Activated CD4-positive, alpha-beta memory T cell treated with anti-CD3 and anti-CD28 coated beads for 36 hours (primary cell): ENCODE measurements at regions of chr10 and their contacts with region 1.

Region 1: DNA sequence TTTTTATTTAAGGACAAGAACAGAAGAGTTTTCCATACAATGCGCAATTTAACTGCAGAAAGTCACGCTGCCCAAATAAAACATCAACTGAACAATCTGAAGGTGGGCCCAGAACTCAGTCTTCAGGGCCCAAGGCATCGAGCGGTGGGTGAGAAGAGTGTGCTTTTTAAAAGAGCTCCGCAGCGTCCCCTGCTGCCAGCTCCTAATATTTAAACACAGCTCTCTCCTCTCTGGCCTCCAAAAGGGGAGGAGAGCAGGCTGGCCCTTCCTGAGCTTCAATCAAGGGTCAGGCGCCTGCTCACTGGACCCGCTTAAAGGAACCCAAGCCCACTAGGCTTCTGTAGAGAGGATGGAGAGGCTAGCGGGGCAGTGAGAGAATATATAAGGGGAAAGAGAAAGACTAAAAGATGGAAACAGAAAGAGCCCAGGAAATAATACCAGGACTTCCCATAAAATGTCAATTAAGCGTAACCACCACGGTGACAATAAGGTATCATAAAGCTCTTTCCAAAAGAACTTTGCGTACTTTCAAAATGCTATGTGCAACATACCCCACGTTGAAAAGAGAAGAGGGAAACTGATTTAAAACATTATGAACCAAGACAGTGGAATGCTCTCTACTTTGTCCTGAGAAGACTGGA is 2.8 kb downstream of the FAM53B start:
- DNase-seq: peak; percentile 86
- H3K4me3 Mint-ChIP-seq: peak overlapping the region; percentile 91
- H3K27ac Mint-ChIP-seq: peak overlapping the region; percentile 88
- H3K4me1 Mint-ChIP-seq: peaks cover 72% of the 10 kb centered on the region
- H3K27me3 Mint-ChIP-seq: no peaks in the 10 kb centered on the region

Region 2: GRCh38 chr10:124530215-124530665 is 211.2 kb before region 1 on chr10:
- CTCF ChIA-PET with region 1: interaction called, 49 read pairs
- POLR2A ChIA-PET with region 1: no interaction called
- intact Hi-C with region 1: loop called (anchors 1 kb)
- DNase-seq: peak; percentile 91
- H3K4me3 Mint-ChIP-seq: no peak overlapping the region
- H3K27ac Mint-ChIP-seq: no peak overlapping the region
- H3K4me1 Mint-ChIP-seq: peaks cover 6% of the 10 kb centered on the region
- H3K27me3 Mint-ChIP-seq: no peaks in the 10 kb centered on the region

Region 3: DNA sequence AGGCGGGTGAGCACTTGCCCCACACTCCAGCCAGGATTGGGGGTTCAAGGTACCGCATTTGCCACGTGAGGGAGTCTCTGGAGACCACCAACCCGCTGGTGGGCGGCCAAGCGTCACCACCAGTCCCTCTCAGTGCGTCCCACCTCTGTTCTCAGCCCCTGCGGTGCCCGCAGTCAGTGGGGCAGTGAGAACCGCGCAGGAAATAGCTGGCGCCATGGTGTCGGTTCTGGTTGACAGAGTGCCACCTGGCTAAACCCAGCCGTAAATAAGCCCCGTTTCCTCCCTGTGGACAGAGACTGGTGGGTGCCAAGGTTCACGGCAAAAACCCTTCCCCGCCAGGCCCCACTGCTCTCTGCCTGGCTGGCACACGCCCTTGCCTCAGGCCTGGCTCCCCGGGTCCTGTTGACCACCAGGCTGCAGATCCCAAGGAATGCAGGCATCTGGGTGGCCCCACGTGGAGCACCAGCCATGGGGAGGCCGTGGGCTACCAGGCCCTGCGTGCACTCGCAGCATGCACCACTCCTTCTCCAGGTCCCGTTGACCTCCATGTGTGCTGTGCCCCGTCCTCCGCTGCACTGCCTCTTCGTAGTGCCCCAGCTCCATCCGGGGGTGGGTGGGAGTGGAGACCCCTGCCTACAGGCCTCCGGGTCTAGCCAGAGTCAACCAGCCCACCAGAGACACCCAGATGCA is 139.8 kb before region 1 on chr10:
- CTCF ChIA-PET with region 1: no interaction called
- POLR2A ChIA-PET with region 1: no interaction called
- intact Hi-C with region 1: no loop called
- DNase-seq: no peak
- H3K4me3 Mint-ChIP-seq: no peak overlapping the region
- H3K27ac Mint-ChIP-seq: no peak overlapping the region
- H3K4me1 Mint-ChIP-seq: no peaks in the 10 kb centered on the region
- H3K27me3 Mint-ChIP-seq: no peaks in the 10 kb centered on the region

Region 4: GRCh38 chr10:124626759-124627380 is 114.5 kb before region 1 on chr10:
- CTCF ChIA-PET with region 1: interaction called, 30 read pairs
- POLR2A ChIA-PET with region 1: interaction called, 4 read pairs
- intact Hi-C with region 1: loop called (anchors 2 kb)
- DNase-seq: peak; percentile 80
- H3K4me3 Mint-ChIP-seq: no peak overlapping the region
- H3K27ac Mint-ChIP-seq: no peak overlapping the region
- H3K4me1 Mint-ChIP-seq: peaks cover 51% of the 10 kb centered on the region
- H3K27me3 Mint-ChIP-seq: no peaks in the 10 kb centered on the region

Region 5: DNA sequence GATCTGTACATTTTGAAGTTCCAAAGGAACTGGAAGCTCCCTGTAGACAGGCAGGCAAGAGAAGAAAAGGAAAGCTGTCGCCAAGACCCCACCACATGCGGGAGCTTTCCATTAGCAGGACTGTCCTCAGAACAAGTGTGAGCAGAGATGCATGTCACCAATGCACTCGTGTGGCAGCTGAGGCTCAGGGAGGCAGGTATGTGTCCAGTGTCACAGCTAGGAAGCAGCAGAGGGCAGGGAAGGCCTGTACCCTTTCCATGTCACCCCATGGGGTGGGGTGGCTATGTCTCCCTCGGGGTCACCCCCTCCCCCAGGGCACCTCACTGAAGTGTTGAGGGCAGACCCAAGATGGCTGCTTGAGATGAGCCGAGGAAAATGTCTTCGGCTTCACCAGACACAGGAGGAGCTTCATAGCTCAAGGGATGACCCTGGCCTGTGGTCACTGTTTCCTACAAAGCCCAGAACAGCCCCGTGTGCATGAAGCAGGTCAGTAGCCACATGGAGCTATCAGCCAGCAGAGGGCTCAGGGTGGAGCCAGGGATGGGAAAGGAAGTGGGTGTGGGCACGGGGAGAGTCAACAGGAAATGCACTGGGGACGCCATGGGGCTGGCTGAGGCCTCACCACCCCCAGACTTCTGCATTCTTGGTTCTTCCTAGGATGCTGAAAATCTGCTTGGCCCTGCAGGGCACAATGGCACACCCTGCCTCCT is 93.8 kb before region 1 on chr10:
- CTCF ChIA-PET with region 1: interaction called, 21 read pairs
- POLR2A ChIA-PET with region 1: interaction called, 3 read pairs
- intact Hi-C with region 1: loop called (anchors 1 kb)
- DNase-seq: peak; percentile 87
- H3K4me3 Mint-ChIP-seq: peak overlapping the region; percentile 58
- H3K27ac Mint-ChIP-seq: peak overlapping the region; percentile 93
- H3K4me1 Mint-ChIP-seq: peaks cover 91% of the 10 kb centered on the region
- H3K27me3 Mint-ChIP-seq: no peaks in the 10 kb centered on the region

Region 6: DNA sequence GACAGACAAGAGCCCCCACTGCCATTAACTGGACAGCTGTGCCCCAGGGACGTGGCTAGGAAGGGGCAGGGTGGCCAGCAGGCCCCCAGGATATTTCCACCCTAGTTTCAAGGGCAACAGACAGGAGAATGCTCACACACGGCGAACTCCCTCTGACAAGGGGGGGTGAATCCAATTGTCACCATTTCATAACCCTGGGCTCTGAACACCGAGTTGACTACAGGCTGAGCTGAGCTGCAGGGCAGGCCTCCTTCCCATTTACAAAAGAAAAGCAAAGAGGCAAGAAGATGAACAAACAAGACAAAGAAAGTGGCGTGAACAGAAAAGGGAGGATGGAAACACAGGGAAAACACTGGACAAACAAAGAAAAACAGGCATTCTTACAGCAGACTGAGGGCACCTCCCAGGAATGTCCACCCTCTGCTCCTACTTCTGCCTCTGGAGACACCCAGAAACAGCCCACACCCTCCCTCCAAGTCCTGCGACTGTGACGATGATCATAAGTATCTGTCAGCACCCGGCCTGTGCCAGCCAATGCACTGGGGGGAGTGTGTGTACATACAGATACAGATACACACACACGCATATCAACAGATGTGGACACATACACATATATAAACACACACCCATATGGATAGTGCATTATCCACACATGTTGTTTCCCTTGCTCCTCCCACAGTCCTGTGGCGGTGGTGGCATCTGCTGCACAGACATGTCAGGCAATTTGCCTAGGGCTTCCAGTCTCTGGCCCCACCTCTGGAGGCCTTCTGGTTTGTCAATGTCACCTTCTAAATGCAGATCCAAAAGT is 63.4 kb before region 1 on chr10:
- CTCF ChIA-PET with region 1: interaction called, 14 read pairs
- POLR2A ChIA-PET with region 1: interaction called, 3 read pairs
- intact Hi-C with region 1: no loop called
- DNase-seq: no peak
- H3K4me3 Mint-ChIP-seq: peak overlapping the region; percentile 7
- H3K27ac Mint-ChIP-seq: peak overlapping the region; percentile 77
- H3K4me1 Mint-ChIP-seq: peaks cover 78% of the 10 kb centered on the region
- H3K27me3 Mint-ChIP-seq: no peaks in the 10 kb centered on the region

Region 7: DNA sequence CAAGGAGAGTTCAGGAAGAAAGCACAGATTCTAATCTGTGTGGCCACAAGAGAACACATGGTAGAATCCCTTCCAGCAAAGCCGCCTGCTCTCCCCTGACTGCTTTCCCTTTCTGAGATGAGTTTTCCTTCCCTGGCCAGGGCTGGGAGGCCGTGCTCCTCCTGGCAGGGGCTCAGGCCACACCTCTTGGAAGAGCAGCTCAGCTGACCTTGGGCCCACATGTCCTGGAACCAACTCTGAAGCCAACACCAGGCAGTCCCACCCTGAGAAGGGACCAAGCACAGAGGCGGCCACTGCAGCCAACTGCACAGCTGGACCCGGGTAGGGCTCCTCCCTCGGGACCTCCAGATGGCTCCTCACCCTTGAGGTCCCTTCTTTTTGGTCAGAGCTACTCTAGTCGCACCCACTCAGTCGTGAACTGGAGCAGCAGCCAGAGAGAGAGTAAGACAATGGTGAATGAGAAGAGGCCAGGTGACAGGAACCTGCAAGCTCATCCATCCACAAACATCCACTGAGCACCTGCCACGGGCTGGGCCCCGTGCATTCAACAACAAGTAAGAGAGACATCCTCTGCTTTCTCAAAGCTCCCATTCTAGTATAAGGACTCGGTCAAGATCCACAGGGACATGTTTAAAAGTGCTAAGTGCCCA is 37.5 kb before region 1 on chr10:
- CTCF ChIA-PET with region 1: interaction called, 39 read pairs
- POLR2A ChIA-PET with region 1: interaction called, 6 read pairs
- intact Hi-C with region 1: no loop called
- DNase-seq: no peak
- H3K4me3 Mint-ChIP-seq: no peak overlapping the region
- H3K27ac Mint-ChIP-seq: peak overlapping the region; percentile 95
- H3K4me1 Mint-ChIP-seq: peaks cover 99% of the 10 kb centered on the region
- H3K27me3 Mint-ChIP-seq: no peaks in the 10 kb centered on the region

Region 8: GRCh38 chr10:124791378-124792348 is 50.3 kb after region 1 on chr10 and contains the start of gene EEF1AKMT2:
- CTCF ChIA-PET with region 1: interaction called, 6 read pairs
- POLR2A ChIA-PET with region 1: interaction called, 6 read pairs
- intact Hi-C with region 1: loop called (anchors 5 kb)
- DNase-seq: peak; percentile 89
- H3K4me3 Mint-ChIP-seq: peak within 1 kb of the TSS; percentile 96
- H3K27ac Mint-ChIP-seq: peak within 1 kb of the TSS; percentile 94
- H3K4me1 Mint-ChIP-seq: peaks cover 19% of the 10 kb centered on the region
- H3K27me3 Mint-ChIP-seq: no peaks in the 10 kb centered on the region
- total RNA-seq, gene EEF1AKMT2: 28.2 to 33.1 TPM

Region 9: GRCh38 chr10:124935946-124936345 is 194.5 kb after region 1 on chr10:
- CTCF ChIA-PET with region 1: no interaction called
- POLR2A ChIA-PET with region 1: no interaction called
- intact Hi-C with region 1: no loop called
- DNase-seq: peak; percentile 52
- H3K4me3 Mint-ChIP-seq: no peak overlapping the region
- H3K27ac Mint-ChIP-seq: no peak overlapping the region
- H3K4me1 Mint-ChIP-seq: peaks cover 43% of the 10 kb centered on the region
- H3K27me3 Mint-ChIP-seq: no peaks in the 10 kb centered on the region

Region 10: DNA sequence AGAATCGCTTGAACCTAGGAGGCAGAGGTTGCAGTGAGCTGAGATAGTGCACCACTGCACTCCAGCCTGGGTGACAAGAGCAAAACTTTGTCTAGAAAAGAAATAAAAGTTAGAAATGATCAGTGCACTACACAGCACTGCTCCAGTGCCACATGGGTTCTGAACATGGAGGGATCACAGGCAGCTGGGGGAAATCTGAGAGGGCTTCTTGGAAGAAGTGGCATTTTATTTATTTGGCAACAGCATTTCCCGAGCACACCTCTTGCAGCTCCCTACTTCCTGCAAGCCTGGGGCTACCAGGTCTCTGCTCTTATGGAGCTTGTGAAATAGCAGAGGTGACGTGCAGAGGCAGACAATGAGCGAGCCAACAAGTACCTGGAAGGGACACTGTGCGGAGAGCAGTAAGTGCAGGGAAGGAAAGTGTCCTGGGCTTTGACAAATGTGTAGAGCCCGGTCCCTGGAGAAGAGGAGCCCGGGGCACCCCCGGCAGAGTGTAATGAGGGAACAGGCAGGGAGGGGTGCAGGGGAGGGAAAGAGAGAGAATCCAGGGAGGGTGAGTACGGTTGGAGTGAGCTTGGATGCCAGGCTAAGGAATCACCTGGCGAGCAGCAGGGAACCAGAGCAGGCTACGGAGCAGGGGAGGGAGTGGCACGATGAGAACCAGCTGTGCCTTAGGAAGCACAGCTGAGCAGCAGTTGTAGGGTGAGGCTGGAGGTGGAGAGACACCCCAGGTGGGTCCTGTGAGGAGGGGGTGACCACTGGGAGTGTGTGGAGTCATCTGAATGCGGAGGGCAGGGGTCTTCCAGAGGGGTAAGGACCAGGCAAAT is 523.6 kb after region 1 on chr10:
- CTCF ChIA-PET with region 1: no interaction called
- POLR2A ChIA-PET with region 1: no interaction called
- intact Hi-C with region 1: no loop called
- DNase-seq: no peak
- H3K4me3 Mint-ChIP-seq: no peak overlapping the region
- H3K27ac Mint-ChIP-seq: no peak overlapping the region
- H3K4me1 Mint-ChIP-seq: no peaks in the 10 kb centered on the region
- H3K27me3 Mint-ChIP-seq: no peaks in the 10 kb centered on the region